Adrenal gland (tissue), 19 donors: ENCODE measurements at regions of chr3 and their contacts with region 1.

Region 1: GRCh38 chr3:142279965-142280590 is 54.7 kb upstream of the GK5 start:
- DNase-seq: peak; percentile 54 to 83 (median 72)
- H3K4me3 ChIP-seq: no peak overlapping the region
- H3K27ac ChIP-seq: no peak overlapping the region
- H3K4me1 ChIP-seq: peaks cover 11 to 25% of the 10 kb centered on the region in 2 donors
- H3K27me3 ChIP-seq: no peaks in the 10 kb centered on the region
- CTCF ChIP-seq: peak; percentile 44 to 85 (median 78)
- POLR2A ChIP-seq: no peak

Region 2: DNA sequence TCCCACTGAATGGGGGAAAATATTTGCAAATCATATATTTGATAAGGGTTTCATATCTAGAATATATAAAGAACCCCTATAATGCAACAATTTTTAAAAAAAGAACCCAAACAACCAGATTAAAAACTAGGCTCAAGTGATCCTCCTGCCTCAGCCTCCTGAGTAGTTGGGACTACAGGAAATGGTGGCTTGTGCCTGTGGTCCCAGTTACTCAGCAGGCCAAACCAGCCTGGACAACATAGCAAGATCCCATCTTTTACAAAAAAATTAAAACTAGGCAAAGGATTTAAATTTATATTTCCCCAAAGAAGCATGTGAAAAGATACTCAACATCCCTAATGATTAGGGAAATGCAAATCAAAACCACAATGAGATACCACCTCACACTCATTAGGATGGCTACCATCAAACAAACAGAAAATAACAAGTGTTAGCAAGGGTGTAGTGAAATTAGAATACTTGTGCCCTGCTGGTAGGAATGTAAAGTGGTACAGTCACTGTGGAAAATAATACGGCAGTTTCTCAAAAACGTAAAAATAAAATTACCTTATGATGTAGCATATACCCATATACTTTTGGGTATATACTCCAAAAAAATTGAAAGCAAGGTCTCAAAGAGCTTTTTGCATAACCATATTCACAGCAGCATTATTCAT is 150.4 kb before region 1 on chr3:
- intact Hi-C with region 1: loop called (anchors 5 to 10 kb)
- DNase-seq: no peak
- H3K4me3 ChIP-seq: no peak overlapping the region
- H3K27ac ChIP-seq: no peak overlapping the region
- H3K4me1 ChIP-seq: peaks cover 0 to 11% of the 10 kb centered on the region in 2 donors
- H3K27me3 ChIP-seq: no peaks in the 10 kb centered on the region
- CTCF ChIP-seq: peak in 1 of 6 experiments; percentile 30
- POLR2A ChIP-seq: no peak

Region 3: GRCh38 chr3:142180761-142181362 is 99.2 kb before region 1 on chr3:
- intact Hi-C with region 1: loop called in 1 of 2 experiments (anchors 10 kb)
- DNase-seq: peak; percentile 41 to 68 (median 53)
- H3K4me3 ChIP-seq: no peak overlapping the region
- H3K27ac ChIP-seq: no peak overlapping the region
- H3K4me1 ChIP-seq: no peaks in the 10 kb centered on the region
- H3K27me3 ChIP-seq: no peaks in the 10 kb centered on the region
- CTCF ChIP-seq: peak; percentile 46 to 68 (median 61)
- POLR2A ChIP-seq: no peak

Region 4: DNA sequence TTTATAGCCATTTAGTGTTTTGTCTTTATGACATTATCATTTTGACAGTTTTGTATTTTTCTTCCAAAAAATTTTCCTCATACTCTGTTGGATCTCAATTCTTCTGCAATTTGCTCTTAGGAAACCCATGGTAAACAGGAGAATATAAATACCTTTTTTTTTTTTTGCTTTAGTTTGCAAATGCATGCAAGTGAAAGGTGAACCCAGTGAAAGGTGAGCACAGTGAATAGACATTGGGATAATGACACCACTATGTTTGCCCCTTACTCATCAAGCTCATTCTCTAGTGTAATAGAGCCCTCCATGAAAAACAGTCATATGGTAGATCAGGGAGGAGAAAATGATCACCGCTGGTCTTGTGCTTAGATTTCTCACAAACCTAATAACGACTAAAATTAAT is 384.7 kb after region 1 on chr3:
- intact Hi-C with region 1: no loop called
- DNase-seq: no peak
- H3K4me3 ChIP-seq: no peak overlapping the region
- H3K27ac ChIP-seq: no peak overlapping the region
- H3K4me1 ChIP-seq: no peaks in the 10 kb centered on the region
- H3K27me3 ChIP-seq: no peaks in the 10 kb centered on the region
- CTCF ChIP-seq: no peak
- POLR2A ChIP-seq: no peak